Activated T-helper 2 cell treated with anti-CD3 and anti-CD28 coated beads, Interferon-gamma antibody, Interleukin-2, Interleukin-4, amounts not matched to agents 10 μg/mL and 5 μg/mL and 100 μg/mL, durations not matched to agents 14 hours and 24 hours and 36 hours (primary cell): ENCODE measurements at regions of chr14 and their contacts with region 1.

Region 1: DNA sequence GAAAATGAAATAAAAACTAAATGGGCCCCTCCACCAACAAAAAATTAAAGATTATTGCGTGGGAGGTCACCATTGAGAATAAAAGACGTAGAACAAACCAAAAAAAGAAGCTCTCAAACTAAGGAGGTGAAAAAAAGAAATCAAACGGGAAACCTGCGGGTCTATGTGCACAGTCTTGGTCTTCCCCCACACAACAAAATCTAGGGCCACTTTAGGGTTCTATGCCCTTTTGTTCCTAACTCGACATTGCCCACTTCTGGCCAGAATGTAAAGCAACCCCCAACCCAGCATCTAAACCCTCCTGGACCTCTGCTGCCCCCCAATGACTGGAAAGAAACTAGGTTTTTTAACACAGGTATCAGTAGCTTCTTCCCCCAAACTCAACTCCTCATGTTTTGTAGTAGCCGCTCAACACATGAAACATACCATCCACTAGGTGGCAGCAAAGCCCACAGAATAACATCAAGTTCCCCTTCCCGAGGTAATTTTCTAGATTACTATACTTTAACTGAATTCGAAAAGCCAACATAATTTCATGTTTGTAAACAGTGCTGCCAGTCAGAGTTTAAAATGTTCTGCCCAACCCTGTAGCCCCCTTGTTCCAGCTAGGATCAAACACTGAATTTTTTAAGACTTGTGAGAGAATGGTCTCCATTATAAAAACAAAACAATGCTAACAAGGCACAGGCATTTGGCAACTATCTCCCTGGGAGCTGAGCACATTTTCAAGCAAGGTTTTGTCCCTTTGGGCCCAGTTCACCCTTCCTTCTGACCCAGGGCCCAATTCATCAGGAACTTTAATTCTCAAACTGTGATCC is 18.7 kb downstream of the DAD1 start:
- DNase-seq: peak; percentile 87
- H3K4me3 Mint-ChIP-seq: peak overlapping the region; percentile 89
- H3K27ac Mint-ChIP-seq: peak overlapping the region; percentile 96
- H3K4me1 Mint-ChIP-seq: peaks cover 70% of the 10 kb centered on the region
- H3K27me3 Mint-ChIP-seq: no peaks in the 10 kb centered on the region

Region 2: GRCh38 chr14:21917699-21918436 is 652.5 kb before region 1 on chr14:
- intact Hi-C with region 1: loop called (anchors 5 kb)
- DNase-seq: peak; percentile 52
- H3K4me3 Mint-ChIP-seq: peak overlapping the region; percentile 75
- H3K27ac Mint-ChIP-seq: peak overlapping the region; percentile 64
- H3K4me1 Mint-ChIP-seq: peaks cover 55% of the 10 kb centered on the region
- H3K27me3 Mint-ChIP-seq: no peaks in the 10 kb centered on the region

Region 3: GRCh38 chr14:22519877-22520685 is 50.3 kb before region 1 on chr14:
- intact Hi-C with region 1: no loop called
- DNase-seq: no peak
- H3K4me3 Mint-ChIP-seq: peak overlapping the region; percentile 78
- H3K27ac Mint-ChIP-seq: peak overlapping the region; percentile 87
- H3K4me1 Mint-ChIP-seq: peaks cover 91% of the 10 kb centered on the region
- H3K27me3 Mint-ChIP-seq: no peaks in the 10 kb centered on the region

Region 4: DNA sequence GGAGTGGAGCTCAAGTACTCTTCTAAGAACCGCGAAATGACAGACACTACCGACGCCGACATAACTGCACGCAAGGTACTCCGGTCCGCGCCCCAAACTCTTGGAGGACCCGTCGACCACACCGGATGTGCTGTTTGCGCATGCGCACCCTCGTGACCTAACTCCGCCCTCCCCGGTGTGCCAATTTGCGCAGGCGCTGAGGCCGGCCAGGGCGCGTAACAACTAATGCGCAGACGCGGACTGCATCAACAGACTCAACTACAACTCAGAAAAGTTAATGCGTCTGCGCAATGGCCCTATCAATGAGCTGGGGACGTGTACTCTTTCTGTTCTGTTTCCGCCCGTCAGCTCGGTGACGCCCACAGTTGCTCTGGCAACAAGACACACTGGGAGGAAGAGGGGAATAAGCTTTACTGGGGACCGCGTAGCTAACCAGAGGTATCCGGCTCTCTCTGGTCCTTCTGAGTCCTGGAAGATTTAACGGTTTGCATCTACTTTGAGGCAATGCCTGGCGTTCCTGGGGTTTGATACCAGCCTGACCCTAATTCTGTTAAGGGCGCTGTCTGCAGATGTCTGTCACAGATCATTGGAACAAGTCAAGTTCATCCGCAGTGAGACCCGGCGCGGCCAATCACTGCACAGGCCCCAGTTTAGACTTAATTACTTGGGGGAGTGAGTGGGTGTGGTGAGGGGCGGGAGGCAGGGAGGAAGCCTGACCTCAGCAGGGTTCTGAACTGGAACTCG is 18.9 kb after region 1 on chr14 and contains the start of gene DAD1:
- intact Hi-C with region 1: loop called (anchors 2 kb)
- DNase-seq: peak; percentile 100
- H3K4me3 Mint-ChIP-seq: peak within 1 kb of the TSS; percentile 88
- H3K27ac Mint-ChIP-seq: peak within 1 kb of the TSS; percentile 95
- H3K4me1 Mint-ChIP-seq: peaks cover 51% of the 10 kb centered on the region
- H3K27me3 Mint-ChIP-seq: peaks cover 10% of the 10 kb centered on the region
- total RNA-seq, gene DAD1: 246 and 256 TPM in 2 replicates

Region 5: GRCh38 chr14:22715186-22715812 is 145.0 kb after region 1 on chr14:
- intact Hi-C with region 1: loop called (anchors 2 kb)
- DNase-seq: no peak
- H3K4me3 Mint-ChIP-seq: no peak overlapping the region
- H3K27ac Mint-ChIP-seq: no peak overlapping the region
- H3K4me1 Mint-ChIP-seq: peaks cover 22% of the 10 kb centered on the region
- H3K27me3 Mint-ChIP-seq: peaks cover 14% of the 10 kb centered on the region

Region 6: DNA sequence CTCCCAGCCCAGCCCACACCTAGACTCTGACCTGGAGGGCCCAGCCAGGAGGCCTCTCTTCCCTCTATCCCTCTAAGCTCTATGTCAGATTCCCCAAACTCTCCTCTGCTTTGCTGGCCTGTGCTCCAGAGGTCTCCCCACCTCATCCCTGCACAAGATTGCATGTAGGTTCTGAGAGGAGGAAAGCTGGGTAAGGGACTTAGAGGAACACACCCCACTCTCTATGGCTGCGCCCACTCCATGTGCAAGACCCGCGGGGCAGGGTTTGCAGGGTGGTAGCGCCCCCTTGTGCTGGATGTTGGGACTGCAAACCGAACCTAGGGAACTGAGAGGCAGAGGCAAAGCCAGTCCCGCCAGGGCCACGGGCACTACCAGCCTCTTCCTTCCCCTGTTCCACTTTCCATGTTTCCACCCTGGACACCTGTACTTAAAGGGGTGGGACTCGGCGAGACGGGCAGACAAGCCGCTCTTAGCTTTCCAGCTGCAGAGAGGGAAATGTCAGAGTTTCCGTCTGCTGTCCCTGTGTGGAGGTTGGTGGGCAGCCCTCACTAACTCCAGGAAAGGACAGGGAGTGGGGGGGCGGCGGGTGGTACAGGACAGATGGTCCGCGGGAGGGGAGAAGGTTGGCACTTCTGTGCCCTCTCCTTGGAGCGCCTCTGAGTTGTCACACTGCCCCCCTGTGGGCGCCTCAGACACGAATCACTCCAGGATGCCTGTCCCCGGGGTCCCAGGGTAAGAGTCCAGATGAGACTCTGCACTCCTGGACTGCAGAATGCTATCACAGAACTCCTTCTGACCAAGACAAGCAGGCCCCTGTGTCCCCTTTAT is 282.8 kb after region 1 on chr14:
- intact Hi-C with region 1: loop called (anchors 1 kb)
- DNase-seq: peak; percentile 80
- H3K4me3 Mint-ChIP-seq: peak overlapping the region; percentile 79
- H3K27ac Mint-ChIP-seq: peak overlapping the region; percentile 40
- H3K4me1 Mint-ChIP-seq: peaks cover 24% of the 10 kb centered on the region
- H3K27me3 Mint-ChIP-seq: peaks cover 9% of the 10 kb centered on the region